ENCODE measurements at regions of chrX and their contacts with region 1.

Region 1: GRCh38 chrX:23694606-23695005 is 27.3 kb downstream of the PRDX4 start:
- DNase-seq: peak; percentile 82
- H3K4me3 ChIP-seq: no peak overlapping the region
- H3K27ac ChIP-seq: no peak overlapping the region
- H3K4me1 ChIP-seq: no peaks in the 10 kb centered on the region
- H3K27me3 ChIP-seq: no peaks in the 10 kb centered on the region
- CTCF ChIP-seq: peak in 1 of 4 experiments; percentile 54
- EP300 ChIP-seq: no peak
- POLR2A ChIP-seq: no peak

Region 2: GRCh38 chrX:23720117-23720677 is 25.6 kb after region 1 on chrX:
- intact Hi-C with region 1: no loop called
- DNase-seq: no peak
- H3K4me3 ChIP-seq: no peak overlapping the region
- H3K27ac ChIP-seq: no peak overlapping the region
- H3K4me1 ChIP-seq: no peaks in the 10 kb centered on the region
- H3K27me3 ChIP-seq: no peaks in the 10 kb centered on the region
- CTCF ChIP-seq: no peak
- EP300 ChIP-seq: no peak
- POLR2A ChIP-seq: no peak

Region 3: DNA sequence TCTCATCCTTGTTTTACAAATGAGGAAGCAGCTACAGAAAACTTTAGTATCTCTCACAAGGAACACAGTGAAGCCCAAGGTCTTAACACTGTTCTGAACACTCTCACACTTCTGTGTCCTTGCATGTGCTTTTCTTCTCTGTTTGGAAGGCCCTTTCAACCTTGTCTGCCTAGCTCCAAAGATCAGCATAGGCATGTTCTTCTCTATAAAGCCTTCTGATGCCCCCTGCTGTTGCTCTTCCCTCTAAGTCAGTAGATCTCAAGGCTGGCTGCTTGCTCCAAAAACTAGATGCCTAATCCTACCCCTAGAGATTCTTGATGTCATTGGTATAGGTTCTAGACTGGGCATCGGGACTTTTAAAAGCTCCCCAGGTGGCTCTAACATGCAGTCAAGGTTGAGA is 207.2 kb after region 1 on chrX:
- intact Hi-C with region 1: loop called (anchors 2 kb)
- DNase-seq: peak; percentile 70
- H3K4me3 ChIP-seq: peak overlapping the region in 3 of 4 donors; percentile 20 to 26 (median 25)
- H3K27ac ChIP-seq: peak overlapping the region; percentile 54 to 73 (median 68)
- H3K4me1 ChIP-seq: peaks cover 0 to 37% (median 4%) of the 10 kb centered on the region in 4 donors
- H3K27me3 ChIP-seq: no peaks in the 10 kb centered on the region
- CTCF ChIP-seq: peak in 3 of 4 experiments; percentile 25 to 39 (median 38)
- EP300 ChIP-seq: no peak
- POLR2A ChIP-seq: no peak

Region 4: DNA sequence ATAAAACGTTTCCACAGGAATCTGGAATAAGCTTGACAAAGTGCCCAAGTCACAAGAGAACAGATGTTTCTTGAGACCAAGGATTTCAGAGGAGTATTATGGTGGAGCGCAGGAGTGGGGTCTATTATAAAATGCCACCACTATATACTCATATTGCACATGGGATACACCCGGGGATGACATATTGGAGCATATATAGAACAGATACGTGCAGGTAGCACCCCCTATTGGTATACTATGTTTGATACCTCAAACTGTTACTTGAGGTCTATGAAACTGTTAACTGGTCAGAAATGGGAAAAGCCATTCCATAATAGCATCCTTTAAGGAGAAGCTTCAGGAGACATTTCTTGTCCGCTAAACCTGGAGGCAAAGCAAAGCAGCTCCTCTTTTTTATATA is 866.5 kb after region 1 on chrX:
- intact Hi-C with region 1: no loop called
- DNase-seq: no peak
- H3K4me3 ChIP-seq: no peak overlapping the region
- H3K27ac ChIP-seq: no peak overlapping the region
- H3K4me1 ChIP-seq: peaks cover 0 to 9% (median 0%) of the 10 kb centered on the region in 4 donors
- H3K27me3 ChIP-seq: peaks cover 0 to 6% (median 0%) of the 10 kb centered on the region in 3 donors
- CTCF ChIP-seq: no peak
- EP300 ChIP-seq: no peak
- POLR2A ChIP-seq: no peak